ENCODE measurements at regions of chr6 and their contacts with region 1.

Region 1: DNA sequence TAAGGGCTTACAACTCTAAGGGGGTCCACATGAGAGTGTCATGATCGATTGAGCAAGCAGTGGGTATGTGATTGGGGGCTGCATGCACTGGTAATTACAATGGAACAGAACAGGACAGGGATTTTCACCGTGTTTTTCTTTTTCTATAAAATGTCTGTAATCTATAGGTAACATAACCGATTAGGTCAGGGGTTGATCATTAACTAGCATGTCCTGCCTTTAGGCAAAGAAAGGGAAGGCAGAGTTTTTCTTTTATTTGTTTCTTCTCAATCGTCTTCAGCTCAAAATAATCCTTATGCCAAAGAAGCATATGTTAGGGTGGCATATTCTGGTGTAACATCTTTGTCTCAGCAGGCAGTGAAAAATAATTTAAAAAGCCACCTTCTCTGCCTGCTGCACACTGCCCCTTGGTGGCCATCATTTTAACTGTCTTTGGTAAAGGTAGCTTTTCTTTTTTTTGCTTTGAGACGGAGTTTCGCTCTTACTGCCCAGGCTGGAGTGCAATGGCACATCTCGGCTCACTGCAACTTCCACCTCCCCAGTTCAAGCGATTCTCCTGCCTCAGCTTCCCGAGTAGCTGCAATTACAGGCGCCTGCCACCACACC is 9.7 kb upstream of the CEP43 start:
- DNase-seq: no peak
- H3K4me3 ChIP-seq: no peak overlapping the region
- H3K27ac ChIP-seq: no peak overlapping the region
- H3K4me1 ChIP-seq: no peaks in the 10 kb centered on the region
- H3K27me3 ChIP-seq: no peaks in the 10 kb centered on the region
- CTCF ChIP-seq: peak in 2 of 3 experiments; percentile 21 to 22
- POLR2A ChIP-seq: no peak

Region 2: GRCh38 chr6:166786704-166787293 is 202.7 kb before region 1 on chr6:
- intact Hi-C with region 1: loop called (anchors 5 kb)
- DNase-seq: peak in 1 of 2 donors; percentile 47
- H3K4me3 ChIP-seq: no peak overlapping the region
- H3K27ac ChIP-seq: no peak overlapping the region
- H3K4me1 ChIP-seq: no peaks in the 10 kb centered on the region
- H3K27me3 ChIP-seq: no peaks in the 10 kb centered on the region
- CTCF ChIP-seq: peak; percentile 71 to 77 (median 74)
- POLR2A ChIP-seq: no peak

Region 3: DNA sequence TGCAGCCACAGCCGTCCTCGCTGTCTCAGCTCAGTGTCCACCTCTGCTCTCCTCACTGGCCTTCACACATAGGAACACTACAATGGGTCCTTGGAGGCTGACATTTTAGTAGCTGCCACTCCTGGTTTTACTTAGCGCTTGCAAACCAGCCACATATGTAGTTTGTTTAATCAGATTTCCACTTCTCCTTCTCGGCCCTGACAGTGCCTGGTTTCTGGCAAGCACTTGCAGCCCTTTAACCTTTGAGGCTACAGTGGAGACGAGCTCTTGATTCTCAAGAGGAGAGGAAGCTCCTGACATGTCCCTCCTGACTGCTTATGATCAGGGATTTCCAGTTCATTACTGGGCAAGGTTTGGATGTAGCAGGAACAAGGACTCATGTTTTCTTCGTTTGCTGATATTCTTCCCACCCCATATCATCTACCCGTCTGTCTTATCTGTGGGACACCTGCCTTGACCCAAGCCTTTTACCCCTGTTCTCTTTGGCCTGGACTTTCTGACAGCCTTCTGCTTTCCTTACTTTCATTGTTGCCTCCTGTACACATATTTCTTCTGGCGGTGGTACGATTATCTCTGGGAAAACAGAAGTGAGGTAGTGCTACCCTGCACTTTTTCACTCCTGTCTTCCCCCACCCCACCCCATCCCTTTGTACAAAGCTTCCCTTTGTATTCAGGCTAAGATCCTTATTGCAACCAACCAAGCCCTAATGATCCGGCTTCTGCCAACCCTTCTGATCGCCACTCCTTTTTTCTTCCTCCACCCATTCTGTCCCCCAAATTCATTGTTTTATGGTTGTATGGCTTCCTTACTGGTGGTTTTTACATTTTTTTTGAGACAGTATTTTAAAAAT is 40.9 kb after region 1 on chr6:
- intact Hi-C with region 1: no loop called
- DNase-seq: no peak
- H3K4me3 ChIP-seq: no peak overlapping the region
- H3K27ac ChIP-seq: no peak overlapping the region
- H3K4me1 ChIP-seq: no peaks in the 10 kb centered on the region
- H3K27me3 ChIP-seq: no peaks in the 10 kb centered on the region
- CTCF ChIP-seq: no peak
- POLR2A ChIP-seq: no peak